ENCODE measurements at regions of chr11 and their contacts with region 1.

Region 1: GRCh38 chr11:29809121-29809520 is 207.7 kb downstream of the KCNA4 start:
- DNase-seq: no peak
- H3K4me3 ChIP-seq: no peak overlapping the region
- H3K27ac ChIP-seq: no peak overlapping the region
- H3K4me1 ChIP-seq: no peaks in the 10 kb centered on the region
- H3K27me3 ChIP-seq: no peaks in the 10 kb centered on the region
- CTCF ChIP-seq: no peak
- EP300 ChIP-seq: no peak
- POLR2A ChIP-seq: no peak

Region 2: DNA sequence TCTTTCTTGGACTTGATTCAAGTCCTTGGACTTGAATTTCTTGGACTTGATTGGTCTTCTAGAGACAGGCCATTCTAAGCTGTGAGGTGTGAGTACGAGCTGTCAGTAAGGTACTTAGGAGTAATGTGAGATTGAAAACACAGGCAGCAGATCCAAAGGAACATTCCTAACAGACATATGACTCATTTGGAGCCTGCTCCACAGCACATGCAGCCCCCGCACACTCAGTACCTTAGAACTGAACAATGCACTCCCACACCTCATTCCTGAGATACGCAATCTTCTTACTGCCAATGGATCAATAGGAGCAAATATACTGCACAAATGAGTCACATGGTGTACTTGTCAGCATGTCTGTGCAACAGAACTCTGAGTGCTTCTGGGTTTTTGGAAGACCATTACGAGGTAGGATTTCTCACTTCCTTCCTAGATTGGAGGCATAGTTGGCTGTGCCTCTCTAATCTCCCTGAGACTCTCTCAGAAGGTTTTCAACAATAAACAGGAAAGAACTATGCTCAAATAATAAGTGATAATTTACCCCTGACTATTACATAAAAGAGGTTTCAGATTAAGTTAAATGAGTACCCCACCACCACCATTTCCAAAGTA is 35.4 kb before region 1 on chr11:
- in situ Hi-C with region 1: no loop called
- intact Hi-C with region 1: no loop called
- DNase-seq: no peak
- H3K4me3 ChIP-seq: no peak overlapping the region
- H3K27ac ChIP-seq: no peak overlapping the region
- H3K4me1 ChIP-seq: no peaks in the 10 kb centered on the region
- H3K27me3 ChIP-seq: no peaks in the 10 kb centered on the region
- CTCF ChIP-seq: no peak
- EP300 ChIP-seq: no peak
- POLR2A ChIP-seq: no peak

Region 3: GRCh38 chr11:31141789-31142188 is 1332.7 kb after region 1 on chr11:
- in situ Hi-C with region 1: no loop called
- intact Hi-C with region 1: loop called (anchors 5 kb)
- DNase-seq: no peak
- H3K4me3 ChIP-seq: no peak overlapping the region
- H3K27ac ChIP-seq: no peak overlapping the region
- H3K4me1 ChIP-seq: no peaks in the 10 kb centered on the region
- H3K27me3 ChIP-seq: no peaks in the 10 kb centered on the region
- CTCF ChIP-seq: no peak
- EP300 ChIP-seq: no peak
- POLR2A ChIP-seq: no peak

Measured in transverse colon (tissue), 4 donors.